K562 (cell line): ENCODE measurements at regions of chr6 and their contacts with region 1.

Region 1: DNA sequence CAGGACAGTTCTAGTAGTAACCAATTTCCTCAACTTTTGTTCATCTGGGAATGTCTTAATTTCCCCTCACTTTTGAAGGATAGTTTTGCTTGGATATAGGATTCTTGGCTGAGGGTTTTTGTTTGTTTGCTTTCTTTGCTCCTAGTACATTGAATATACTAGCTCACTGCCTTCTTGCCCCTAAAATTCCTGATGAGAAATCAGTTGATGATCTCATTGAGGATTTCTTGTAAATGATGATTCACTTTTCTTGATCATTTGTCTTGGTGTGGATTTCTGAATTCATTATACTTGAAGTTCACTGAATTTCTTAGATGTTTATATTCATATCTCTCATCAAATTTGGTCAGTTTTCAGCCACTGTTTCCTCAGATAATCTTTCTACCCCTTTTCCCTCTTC is 49.1 kb upstream of the PRDM1 start:
- DNase-seq: no peak
- ATAC-seq: no peak
- H3K4me3 ChIP-seq: no peak overlapping the region
- H3K27ac ChIP-seq: no peak overlapping the region
- H3K4me1 ChIP-seq: no peaks in the 10 kb centered on the region
- H3K27me3 ChIP-seq: peaks cover 0 to 2% of the 10 kb centered on the region in 2 experiments; a peak in 2 of 5 replicates
- CTCF ChIP-seq: no peak
- EP300 ChIP-seq: no peak
- POLR2A ChIP-seq: no peak
- RAD21 ChIP-seq: no peak

Region 2: DNA sequence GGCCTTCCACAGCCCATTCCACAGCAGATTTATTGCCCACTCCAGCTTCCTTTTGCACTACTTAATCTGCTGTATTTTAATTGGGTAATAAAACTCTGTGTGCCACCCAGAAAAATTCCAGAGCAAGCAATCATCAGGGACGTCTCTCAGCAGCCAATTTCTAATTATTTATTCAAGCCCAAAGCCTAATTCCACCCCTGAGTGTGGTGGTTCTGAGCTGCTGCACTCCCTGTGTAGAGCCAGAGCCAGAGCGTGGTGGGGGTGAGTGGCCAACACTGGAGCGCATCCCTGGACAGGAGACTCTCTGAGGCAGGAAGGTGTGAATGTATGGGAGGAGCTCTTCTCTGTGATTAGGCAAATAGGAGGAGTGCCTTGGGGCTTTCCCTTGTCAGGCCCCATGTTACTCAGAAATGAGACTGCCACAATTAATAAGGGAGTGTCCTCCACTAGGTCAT is 871.4 kb after region 1 on chr6:
- CTCF ChIA-PET with region 1: no interaction called
- POLR2A ChIA-PET with region 1: no interaction called
- in situ Hi-C with region 1: loop called (anchors 10 kb)
- intact Hi-C with region 1: no loop called
- DNase-seq: no peak
- ATAC-seq: no peak
- H3K4me3 ChIP-seq: no peak overlapping the region
- H3K27ac ChIP-seq: no peak overlapping the region
- H3K4me1 ChIP-seq: peaks cover 4 to 30% of the 10 kb centered on the region in 2 experiments; a peak in 4 of 5 replicates
- H3K27me3 ChIP-seq: no peaks in the 10 kb centered on the region
- CTCF ChIP-seq: no peak
- EP300 ChIP-seq: no peak
- POLR2A ChIP-seq: no peak
- RAD21 ChIP-seq: no peak